ENCODE measurements at regions of chr11 and their contacts with region 1.

Region 1: GRCh38 chr11:91261513-91261912 is 963.1 kb upstream of the FAT3 start:
- DNase-seq: no peak
- H3K4me3 ChIP-seq: no peak overlapping the region
- H3K4me3 Mint-ChIP-seq: no peak overlapping the region
- H3K27ac Mint-ChIP-seq: no peak overlapping the region
- H3K4me1 ChIP-seq: no peaks in the 10 kb centered on the region
- H3K4me1 Mint-ChIP-seq: no peaks in the 10 kb centered on the region
- H3K27me3 ChIP-seq: no peaks in the 10 kb centered on the region
- H3K27me3 Mint-ChIP-seq: peaks cover 3% of the 10 kb centered on the region
- CTCF ChIP-seq: peak in 1 of 2 experiments; percentile 31

Region 2: DNA sequence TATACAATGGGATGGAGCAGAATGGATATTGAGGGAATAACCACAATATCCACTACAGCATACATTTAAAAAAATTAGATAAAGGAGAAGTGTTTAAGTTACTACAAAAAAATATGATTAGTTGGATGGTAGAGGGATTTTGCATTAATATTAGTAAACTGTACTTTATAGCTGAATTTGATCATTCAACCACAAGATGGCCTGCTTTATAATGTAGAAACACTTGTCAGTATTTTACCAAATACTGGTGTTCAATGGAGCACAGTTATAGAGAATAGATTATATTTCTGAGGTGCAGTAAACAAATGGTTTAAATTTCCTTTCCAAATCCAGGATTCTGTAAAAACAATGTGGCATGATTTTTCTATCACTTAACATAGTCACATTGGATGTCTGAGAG is 219.9 kb before region 1 on chr11:
- CTCF ChIA-PET with region 1: no interaction called
- POLR2A ChIA-PET with region 1: no interaction called
- intact Hi-C with region 1: loop called (anchors 1 kb)
- DNase-seq: no peak
- H3K4me3 ChIP-seq: no peak overlapping the region
- H3K4me3 Mint-ChIP-seq: no peak overlapping the region
- H3K27ac Mint-ChIP-seq: no peak overlapping the region
- H3K4me1 ChIP-seq: no peaks in the 10 kb centered on the region
- H3K4me1 Mint-ChIP-seq: no peaks in the 10 kb centered on the region
- H3K27me3 ChIP-seq: no peaks in the 10 kb centered on the region
- H3K27me3 Mint-ChIP-seq: no peaks in the 10 kb centered on the region
- CTCF ChIP-seq: peak in 1 of 2 experiments; percentile 24

Measured in Caco-2 (cell line).